SK-N-SH (cell line): ENCODE measurements at regions of chr3 and their contacts with region 1.

Region 1: GRCh38 chr3:8938021-8938420 is 25.3 kb downstream of the RAD18 start:
- DNase-seq: no peak
- H3K4me3 ChIP-seq: no peak overlapping the region
- H3K27ac ChIP-seq: peak overlapping the region; percentile 67 to 89; a peak in 3 of 4 replicates
- H3K4me1 ChIP-seq: peaks cover 2 to 13% of the 10 kb centered on the region in 2 experiments; a peak in 3 of 4 replicates
- H3K27me3 ChIP-seq: no peaks in the 10 kb centered on the region
- CTCF ChIP-seq: peak; percentile 64
- EP300 ChIP-seq: no peak
- RAD21 ChIP-seq: peak; percentile 44; the same call in 1 of the 2 replicates

Region 2: DNA sequence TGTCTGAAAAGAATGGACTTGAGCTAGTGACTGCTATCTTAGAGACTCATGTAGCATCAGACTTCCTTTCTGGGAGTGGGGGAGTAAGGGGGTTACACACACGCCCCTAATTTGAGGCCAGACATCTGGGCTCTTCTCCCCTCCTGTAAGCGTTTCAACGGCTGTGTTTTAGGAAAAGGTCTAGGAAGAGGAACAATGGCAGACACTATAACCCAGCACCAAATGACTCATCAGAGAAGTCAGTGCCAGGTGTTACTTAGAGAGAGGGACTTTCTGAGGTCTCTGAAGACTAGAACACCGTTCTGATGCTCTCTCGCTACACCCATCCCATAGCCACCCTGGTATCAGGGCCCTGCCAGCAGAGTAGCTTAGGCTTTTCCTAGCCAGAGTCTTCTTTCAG is 358.9 kb before region 1 on chr3:
- CTCF ChIA-PET with region 1: no interaction called
- POLR2A ChIA-PET with region 1: no interaction called
- DNase-seq: no peak
- H3K4me3 ChIP-seq: no peak overlapping the region
- H3K27ac ChIP-seq: no peak overlapping the region
- H3K4me1 ChIP-seq: peaks cover 0 to 7% of the 10 kb centered on the region in 2 experiments; a peak in 1 of 4 replicates
- H3K27me3 ChIP-seq: no peaks in the 10 kb centered on the region
- CTCF ChIP-seq: no peak
- EP300 ChIP-seq: no peak
- RAD21 ChIP-seq: no peak

Region 3: GRCh38 chr3:8954938-8955763 is 17.1 kb after region 1 on chr3:
- CTCF ChIA-PET with region 1: interaction called, 14 read pairs
- POLR2A ChIA-PET with region 1: no interaction called
- DNase-seq: no peak
- H3K4me3 ChIP-seq: no peak overlapping the region
- H3K27ac ChIP-seq: peak overlapping the region in 1 of 2 experiments; percentile 43; a peak in 1 of 4 replicates
- H3K4me1 ChIP-seq: peaks cover 8% of the 10 kb centered on the region in 2 experiments; a peak in 3 of 4 replicates
- H3K27me3 ChIP-seq: no peaks in the 10 kb centered on the region
- CTCF ChIP-seq: peak; percentile 11; the same call in 1 of the 2 replicates
- EP300 ChIP-seq: no peak
- RAD21 ChIP-seq: no peak